AG04450 (cell line): ENCODE measurements at regions of chr1 and their contacts with region 1.

Region 1: GRCh38 chr1:158087320-158087927 is 93.3 kb upstream of the CD1D start:
- DNase-seq: peak; percentile 57
- H3K4me3 ChIP-seq: no peak overlapping the region
- H3K27ac ChIP-seq: no peak overlapping the region
- H3K27me3 ChIP-seq: no peaks in the 10 kb centered on the region
- CTCF ChIP-seq: peak; percentile 98

Region 2: DNA sequence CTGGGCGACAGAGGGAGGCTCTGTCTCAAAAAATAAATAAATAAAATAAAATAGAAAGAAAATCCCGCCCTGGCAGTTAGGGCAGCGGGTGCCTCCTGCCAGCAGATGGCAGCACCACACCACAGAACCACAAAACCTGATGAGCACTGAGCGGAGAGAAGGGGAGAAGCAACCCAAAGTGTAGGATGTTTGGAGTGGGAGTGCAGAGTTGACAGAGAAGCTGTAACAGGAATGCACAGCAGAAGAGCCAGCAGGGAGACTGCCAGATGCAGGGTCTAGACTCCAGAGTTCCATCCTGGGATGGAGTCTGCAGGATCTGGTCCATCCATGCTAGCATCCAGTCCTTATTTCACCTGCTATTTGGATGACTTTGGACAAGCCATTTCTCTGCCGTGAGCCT is 123.7 kb before region 1 on chr1:
- CTCF ChIA-PET with region 1: interaction called, 35 read pairs
- POLR2A ChIA-PET with region 1: no interaction called
- DNase-seq: peak; percentile 51
- H3K4me3 ChIP-seq: no peak overlapping the region
- H3K27ac ChIP-seq: no peak overlapping the region
- H3K27me3 ChIP-seq: peaks cover 16% of the 10 kb centered on the region
- CTCF ChIP-seq: peak; percentile 92

Region 3: GRCh38 chr1:157969697-157970485 is 117.5 kb before region 1 on chr1:
- CTCF ChIA-PET with region 1: interaction called, 35 read pairs
- POLR2A ChIA-PET with region 1: no interaction called
- DNase-seq: peak; percentile 65
- H3K4me3 ChIP-seq: no peak overlapping the region
- H3K27ac ChIP-seq: peak overlapping the region; percentile 94
- H3K27me3 ChIP-seq: peaks cover 3% of the 10 kb centered on the region
- CTCF ChIP-seq: peak; percentile 98

Region 4: DNA sequence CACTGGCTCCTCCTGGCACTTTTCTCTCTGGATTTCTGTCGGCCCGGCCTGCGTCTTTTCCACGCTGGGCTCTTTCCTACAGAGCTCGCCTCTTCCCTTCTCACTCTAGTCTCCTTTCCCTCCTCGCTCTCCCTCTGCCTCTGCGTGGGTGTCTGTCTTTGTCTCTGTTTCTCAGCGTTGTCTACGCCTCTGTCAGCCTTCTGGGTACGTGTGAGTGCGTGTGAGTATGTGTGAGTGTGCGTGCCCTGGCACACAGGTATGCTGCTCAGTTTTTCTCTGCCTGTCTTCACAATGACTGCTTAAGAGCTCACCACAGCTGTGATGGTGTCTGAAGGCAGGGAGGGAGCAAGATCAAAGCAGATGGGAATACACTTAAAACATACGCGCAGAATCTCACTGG is 16.3 kb before region 1 on chr1:
- CTCF ChIA-PET with region 1: interaction called, 22 read pairs
- POLR2A ChIA-PET with region 1: no interaction called
- DNase-seq: no peak
- H3K4me3 ChIP-seq: no peak overlapping the region
- H3K27ac ChIP-seq: peak overlapping the region; percentile 21
- H3K27me3 ChIP-seq: no peaks in the 10 kb centered on the region
- CTCF ChIP-seq: no peak

Region 5: GRCh38 chr1:158101927-158102326 is 14.5 kb after region 1 on chr1:
- CTCF ChIA-PET with region 1: interaction called, 281 read pairs
- POLR2A ChIA-PET with region 1: no interaction called
- DNase-seq: no peak
- H3K4me3 ChIP-seq: no peak overlapping the region
- H3K27ac ChIP-seq: no peak overlapping the region
- H3K27me3 ChIP-seq: peaks cover 3% of the 10 kb centered on the region
- CTCF ChIP-seq: no peak